ENCODE measurements at regions of chr14 and their contacts with region 1.

Region 1: DNA sequence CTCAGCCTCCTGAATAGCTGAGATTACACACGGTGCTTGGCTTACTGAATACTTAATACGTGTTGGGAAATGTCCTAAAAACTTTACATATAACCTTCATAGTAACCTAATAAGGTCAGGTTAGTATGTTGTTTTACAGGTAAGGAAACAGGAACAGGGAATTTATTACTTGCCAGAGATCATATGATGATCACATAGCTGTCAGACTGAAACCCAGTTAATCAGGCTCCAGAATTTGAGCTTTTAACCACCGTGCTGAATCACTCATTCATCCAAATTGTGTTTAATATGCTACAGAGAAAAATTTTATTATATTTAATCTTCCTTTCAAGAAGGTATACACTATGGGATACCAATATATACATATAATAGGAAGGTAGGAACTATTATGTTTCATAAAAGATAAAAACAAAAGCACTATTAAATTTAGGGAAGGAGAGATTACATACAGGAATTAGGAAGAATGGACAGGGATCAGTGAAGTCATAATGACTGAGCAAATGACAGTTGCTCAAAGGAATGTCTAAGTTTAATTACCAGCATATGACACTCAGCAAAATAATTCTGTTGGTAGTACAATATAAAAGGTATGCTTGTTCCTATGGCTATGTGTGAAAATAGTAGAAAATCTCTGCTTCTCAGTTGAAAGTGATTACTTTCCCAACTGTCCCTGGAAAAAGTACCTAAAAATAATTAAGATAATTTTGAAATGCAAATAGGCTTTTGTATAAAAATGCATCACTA is 59.3 kb downstream of the HEATR5A start:
- DNase-seq: no peak

Region 2: DNA sequence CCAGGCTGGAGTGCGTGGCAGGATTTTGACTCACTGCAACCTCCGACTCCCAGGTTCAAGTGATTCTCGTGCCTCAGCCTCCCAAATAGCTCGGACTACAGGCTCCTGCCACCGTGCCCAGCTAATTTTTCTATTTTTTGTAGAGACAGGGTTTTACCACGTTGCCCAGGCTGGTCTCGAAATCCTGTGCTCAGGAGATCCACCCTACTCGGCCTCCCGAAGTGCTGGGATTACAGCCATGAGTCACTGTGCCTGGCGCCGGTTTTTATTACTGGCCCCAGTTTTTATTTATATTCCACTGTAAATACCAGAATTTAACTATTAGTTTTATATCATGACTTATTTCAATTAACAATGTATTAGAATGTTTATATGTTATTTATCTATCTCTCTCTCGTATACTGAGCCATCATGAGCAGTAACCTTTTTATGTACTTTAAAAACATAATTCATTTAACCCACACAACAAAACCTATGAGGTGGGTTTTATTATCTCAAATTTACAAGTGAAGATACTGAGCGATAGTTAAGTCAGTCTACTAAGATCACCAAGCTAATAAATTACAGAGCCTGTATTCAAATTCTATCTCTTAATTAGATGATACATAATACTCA is 201.3 kb before region 1 on chr14:
- intact Hi-C with region 1: loop called in 1 of 2 experiments (anchors 10 kb)
- DNase-seq: no peak

Region 3: GRCh38 chr14:31408421-31408820 is 47.3 kb after region 1 on chr14:
- intact Hi-C with region 1: loop called in 1 of 2 experiments (anchors 2 kb)
- DNase-seq: no peak